ENCODE measurements at regions of chr1 and their contacts with region 1.

Region 1: DNA sequence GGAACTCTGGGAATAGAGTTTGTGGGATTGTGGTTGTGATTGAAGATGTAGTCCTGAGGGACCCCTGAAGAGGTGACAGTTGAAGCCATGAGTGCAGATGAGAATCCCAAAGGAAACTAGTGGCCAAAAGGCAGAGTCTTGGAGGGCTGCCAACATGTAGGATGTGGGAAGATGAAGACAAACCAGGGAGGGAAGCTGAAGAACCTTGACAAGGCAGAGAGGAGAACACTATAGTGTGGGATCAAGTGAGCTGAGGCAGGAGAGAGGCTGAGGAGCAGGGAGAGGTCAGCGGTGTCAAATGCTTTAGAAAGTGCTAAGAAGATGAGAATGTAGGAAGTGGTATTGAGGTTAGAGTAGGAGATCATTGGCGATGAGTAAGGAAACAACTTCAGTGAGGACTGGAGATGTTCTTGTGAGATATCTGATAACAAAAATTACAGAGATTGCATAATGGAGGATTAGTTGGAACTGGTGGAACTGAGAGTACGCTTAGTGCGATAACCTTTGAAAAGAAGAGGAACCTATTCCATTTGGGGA is 88.5 kb upstream of the VCAM1 start:
- DNase-seq: no peak
- ATAC-seq: no peak
- H3K4me3 ChIP-seq: no peak overlapping the region
- H3K27ac ChIP-seq: no peak overlapping the region
- H3K4me1 ChIP-seq: no peaks in the 10 kb centered on the region
- H3K27me3 ChIP-seq: no peaks in the 10 kb centered on the region
- CTCF ChIP-seq: no peak
- EP300 ChIP-seq: no peak
- POLR2A ChIP-seq: no peak
- RAD21 ChIP-seq: no peak

Region 2: GRCh38 chr1:100584761-100585745 is 46.0 kb before region 1 on chr1:
- CTCF ChIA-PET with region 1: no interaction called
- POLR2A ChIA-PET with region 1: no interaction called
- in situ Hi-C with region 1: no loop called
- intact Hi-C with region 1: loop called (anchors 5 kb)
- DNase-seq: peak; percentile 82
- ATAC-seq: peak; percentile 94
- H3K4me3 ChIP-seq: 0 out of 6 replicates have a peak overlapping the region, but pooled peaks of 1 of the 3 experiments have one; percentile 7
- H3K27ac ChIP-seq: peak overlapping the region; percentile 70
- H3K4me1 ChIP-seq: peaks cover 51% of the 10 kb centered on the region
- H3K27me3 ChIP-seq: no peaks in the 10 kb centered on the region
- CTCF ChIP-seq: no peak
- EP300 ChIP-seq: peak; percentile 38 to 41; a peak in 1 of 4 replicates
- POLR2A ChIP-seq: no peak
- RAD21 ChIP-seq: no peak

Measured in HepG2 (cell line).